SK-N-SH (cell line): ENCODE measurements at regions of chr3 and their contacts with region 1.

Region 1: GRCh38 chr3:46488735-46489361 is 8.9 kb upstream of the RTP3 start:
- DNase-seq: peak; percentile 95
- H3K4me3 ChIP-seq: peak overlapping the region in 1 of 2 experiments; percentile 51; a peak in 1 of 4 replicates
- H3K27ac ChIP-seq: no peak overlapping the region
- H3K4me1 ChIP-seq: peaks cover 0 to 3% of the 10 kb centered on the region in 2 experiments; a peak in 1 of 4 replicates
- H3K27me3 ChIP-seq: no peaks in the 10 kb centered on the region; the same call in 1 of the 2 replicates
- CTCF ChIP-seq: peak; percentile 93
- EP300 ChIP-seq: no peak
- RAD21 ChIP-seq: peak; percentile 99

Region 2: GRCh38 chr3:46163318-46164041 is 325.4 kb before region 1 on chr3:
- CTCF ChIA-PET with region 1: no interaction called
- POLR2A ChIA-PET with region 1: no interaction called
- DNase-seq: no peak
- H3K4me3 ChIP-seq: no peak overlapping the region
- H3K27ac ChIP-seq: no peak overlapping the region
- H3K4me1 ChIP-seq: no peaks in the 10 kb centered on the region
- H3K27me3 ChIP-seq: no peaks in the 10 kb centered on the region
- CTCF ChIP-seq: no peak
- EP300 ChIP-seq: no peak
- RAD21 ChIP-seq: no peak

Region 3: DNA sequence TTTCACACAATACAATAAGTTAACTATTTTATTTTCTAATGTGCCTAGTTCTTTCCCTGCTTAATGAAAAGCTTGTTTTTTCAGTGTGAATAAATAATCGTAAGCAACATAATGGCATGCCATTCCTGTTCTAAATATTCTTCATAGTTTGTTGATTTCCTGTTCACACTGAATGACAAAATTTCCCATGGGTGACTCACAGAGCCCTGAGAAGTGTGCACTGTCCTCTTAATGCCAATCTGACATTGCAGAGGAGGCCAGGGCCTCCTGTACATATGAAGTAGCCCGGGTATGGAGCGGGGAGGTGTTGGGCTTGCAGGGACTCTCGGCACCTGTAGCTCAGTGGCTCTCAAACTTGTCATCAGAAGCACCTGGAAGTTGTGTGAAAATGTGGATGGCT is 222.2 kb before region 1 on chr3:
- CTCF ChIA-PET with region 1: no interaction called
- POLR2A ChIA-PET with region 1: no interaction called
- DNase-seq: no peak
- H3K4me3 ChIP-seq: no peak overlapping the region
- H3K27ac ChIP-seq: no peak overlapping the region
- H3K4me1 ChIP-seq: no peaks in the 10 kb centered on the region
- H3K27me3 ChIP-seq: no peaks in the 10 kb centered on the region; the same call in 1 of the 2 replicates
- CTCF ChIP-seq: no peak
- EP300 ChIP-seq: no peak
- RAD21 ChIP-seq: no peak

Region 4: GRCh38 chr3:46462111-46462510 is 26.7 kb before region 1 on chr3:
- CTCF ChIA-PET with region 1: interaction called, 39 read pairs
- POLR2A ChIA-PET with region 1: no interaction called
- DNase-seq: no peak
- H3K4me3 ChIP-seq: no peak overlapping the region
- H3K27ac ChIP-seq: no peak overlapping the region
- H3K4me1 ChIP-seq: no peaks in the 10 kb centered on the region; a peak in 1 of 4 replicates
- H3K27me3 ChIP-seq: peaks cover 25% of the 10 kb centered on the region
- CTCF ChIP-seq: 0 out of 2 replicates have a peak, but pooled peaks have one; percentile 11
- EP300 ChIP-seq: no peak
- RAD21 ChIP-seq: no peak

Region 5: DNA sequence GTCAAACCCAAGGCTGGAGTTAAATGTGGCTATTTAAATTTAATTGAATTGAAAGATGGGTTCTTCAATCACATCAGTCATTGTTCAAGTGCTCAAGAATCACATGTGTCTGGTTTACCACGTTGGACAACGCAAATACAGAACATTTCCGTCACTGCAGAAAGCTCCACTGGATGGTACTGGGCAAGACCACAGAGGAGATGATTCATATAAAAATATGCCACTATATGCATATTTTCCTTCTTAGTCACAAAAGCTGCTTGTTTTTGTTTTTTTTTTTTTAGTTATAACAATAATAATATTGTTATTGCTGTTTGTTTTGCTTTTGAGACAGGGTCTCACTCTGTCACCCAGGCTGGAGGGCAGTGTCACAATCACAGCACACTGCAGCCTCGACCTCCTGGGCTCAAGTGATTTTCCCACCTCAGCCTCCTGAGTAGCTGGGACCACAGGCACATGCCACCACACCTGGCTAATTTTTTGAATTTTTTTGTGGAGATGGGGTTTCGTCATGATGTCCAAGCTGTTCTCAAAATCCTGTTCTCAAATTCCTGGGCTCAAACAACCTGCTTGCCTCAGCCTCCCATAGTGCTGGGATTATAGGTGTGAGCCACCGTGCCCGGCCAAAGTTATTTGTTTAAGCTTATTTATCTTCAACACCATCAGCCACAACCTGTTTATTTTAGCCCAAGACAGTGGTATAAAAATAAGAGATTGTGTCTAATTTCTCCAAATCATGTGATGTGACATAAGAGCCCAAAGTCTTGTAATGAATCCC is 28.4 kb after region 1 on chr3:
- CTCF ChIA-PET with region 1: interaction called, 18 read pairs
- POLR2A ChIA-PET with region 1: no interaction called
- DNase-seq: no peak
- H3K4me3 ChIP-seq: no peak overlapping the region
- H3K27ac ChIP-seq: no peak overlapping the region
- H3K4me1 ChIP-seq: no peaks in the 10 kb centered on the region
- H3K27me3 ChIP-seq: no peaks in the 10 kb centered on the region
- CTCF ChIP-seq: no peak
- EP300 ChIP-seq: no peak
- RAD21 ChIP-seq: no peak

Region 6: DNA sequence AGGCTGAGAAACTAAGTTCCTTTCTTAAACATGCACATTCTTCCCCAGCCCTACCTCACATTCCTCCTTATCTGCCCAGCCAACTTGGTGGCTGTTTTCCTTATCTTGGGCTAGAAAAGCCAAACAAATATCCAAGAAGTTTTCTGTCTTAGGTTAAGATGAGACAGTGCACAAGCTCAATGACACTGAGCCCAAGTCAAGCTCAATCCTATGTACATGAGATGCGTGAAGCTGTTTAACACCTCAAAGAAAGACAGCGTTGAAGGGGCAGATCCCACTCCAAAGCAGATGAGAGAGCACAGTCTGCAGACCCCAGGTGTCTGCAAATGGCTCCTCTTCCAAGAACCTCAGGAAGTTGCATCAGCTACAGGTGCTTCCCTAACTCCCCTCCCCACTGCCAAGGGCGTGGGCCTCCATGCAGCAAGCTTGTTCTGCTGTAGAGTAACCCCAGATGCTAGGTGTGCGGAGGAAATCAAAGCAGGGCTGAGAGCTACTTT is 60.6 kb after region 1 on chr3:
- CTCF ChIA-PET with region 1: interaction called, 27 read pairs
- POLR2A ChIA-PET with region 1: no interaction called
- DNase-seq: no peak
- H3K4me3 ChIP-seq: no peak overlapping the region
- H3K27ac ChIP-seq: no peak overlapping the region
- H3K4me1 ChIP-seq: no peaks in the 10 kb centered on the region
- H3K27me3 ChIP-seq: peaks cover 4% of the 10 kb centered on the region; the same call in 1 of the 2 replicates
- CTCF ChIP-seq: no peak
- EP300 ChIP-seq: no peak
- RAD21 ChIP-seq: no peak

Region 7: GRCh38 chr3:46629551-46630517 is 141.0 kb after region 1 on chr3:
- CTCF ChIA-PET with region 1: interaction called, 15 read pairs
- POLR2A ChIA-PET with region 1: no interaction called
- DNase-seq: peak; percentile 50
- H3K4me3 ChIP-seq: no peak overlapping the region
- H3K27ac ChIP-seq: no peak overlapping the region
- H3K4me1 ChIP-seq: no peaks in the 10 kb centered on the region
- H3K27me3 ChIP-seq: no peaks in the 10 kb centered on the region; the same call in 1 of the 2 replicates
- CTCF ChIP-seq: peak; percentile 60
- EP300 ChIP-seq: no peak
- RAD21 ChIP-seq: peak; percentile 26; the same call in 1 of the 2 replicates

Region 8: DNA sequence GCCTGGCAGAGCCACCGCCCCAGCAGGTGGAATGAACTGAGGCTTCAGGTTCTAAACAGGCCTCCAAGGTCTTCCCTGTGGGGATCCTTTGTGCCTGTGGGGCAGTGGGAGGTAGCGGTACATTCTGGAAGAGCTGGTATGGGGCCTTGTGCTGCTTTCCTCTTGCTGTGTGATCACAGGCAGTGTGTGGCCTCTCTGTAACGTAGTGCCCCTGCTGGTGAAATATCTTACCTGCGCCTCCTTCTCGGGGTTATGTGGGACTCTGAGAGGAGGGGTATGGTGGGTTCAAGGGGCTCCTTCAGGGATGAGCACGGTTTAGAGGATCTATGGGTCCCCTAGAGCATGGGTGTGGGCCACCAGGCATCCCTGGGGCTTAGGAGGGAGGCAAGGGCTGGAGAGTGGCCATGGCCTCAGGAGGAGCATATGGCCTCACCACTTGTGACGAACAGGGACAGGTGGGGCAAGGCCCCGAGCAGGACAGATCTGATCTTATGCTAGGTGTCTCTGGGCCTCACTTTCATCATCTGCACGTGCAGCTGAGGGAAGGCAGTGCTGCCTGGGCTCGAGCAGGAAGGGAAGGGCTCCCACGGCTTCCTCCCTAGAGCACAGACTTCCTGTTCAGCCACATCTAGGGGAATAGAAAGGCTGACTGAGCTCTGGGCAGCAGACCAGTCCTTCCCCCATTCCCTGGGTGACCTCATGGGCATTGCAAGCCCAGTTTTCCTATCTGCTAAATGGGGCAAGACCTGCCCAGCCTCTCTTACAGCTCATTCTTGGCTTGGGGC is 206.5 kb after region 1 on chr3:
- CTCF ChIA-PET with region 1: interaction called, 44 read pairs
- POLR2A ChIA-PET with region 1: no interaction called
- DNase-seq: peak; percentile 47
- H3K4me3 ChIP-seq: no peak overlapping the region
- H3K27ac ChIP-seq: no peak overlapping the region; a peak in 1 of 4 replicates
- H3K4me1 ChIP-seq: peaks cover 0 to 30% of the 10 kb centered on the region in 2 experiments; a peak in 1 of 4 replicates
- H3K27me3 ChIP-seq: no peaks in the 10 kb centered on the region; the same call in 1 of the 2 replicates
- CTCF ChIP-seq: no peak; the same call in 1 of the 2 replicates
- EP300 ChIP-seq: no peak
- RAD21 ChIP-seq: peak; percentile 27

Region 9: DNA sequence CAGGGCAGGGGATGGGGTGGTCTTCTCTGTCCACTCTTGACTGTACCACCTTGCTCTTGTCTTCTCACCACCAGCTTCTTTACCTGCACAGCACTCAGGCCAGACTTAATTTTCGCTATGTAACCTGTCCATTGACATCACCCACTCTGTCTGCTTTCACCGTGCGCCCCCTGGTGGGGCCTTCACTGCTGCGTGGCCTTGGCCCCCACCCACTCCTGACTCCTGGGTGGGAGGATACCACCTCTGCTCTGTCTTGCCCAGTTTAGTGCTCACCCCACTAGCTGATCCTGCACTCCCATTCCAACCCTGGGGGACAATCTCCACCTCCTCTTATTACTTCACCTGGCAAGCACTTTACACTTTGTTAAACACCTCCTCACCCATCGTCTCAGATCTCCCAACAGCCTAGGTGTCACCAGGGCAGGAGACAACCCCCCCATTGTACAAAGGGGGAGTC is 406.4 kb after region 1 on chr3:
- CTCF ChIA-PET with region 1: interaction called, 17 read pairs
- POLR2A ChIA-PET with region 1: no interaction called
- DNase-seq: peak; percentile 85
- H3K4me3 ChIP-seq: no peak overlapping the region; a peak in 1 of 4 replicates
- H3K27ac ChIP-seq: no peak overlapping the region
- H3K4me1 ChIP-seq: peaks cover 0 to 32% of the 10 kb centered on the region in 2 experiments; a peak in 1 of 4 replicates
- H3K27me3 ChIP-seq: no peaks in the 10 kb centered on the region
- CTCF ChIP-seq: peak; percentile 90
- EP300 ChIP-seq: no peak
- RAD21 ChIP-seq: peak; percentile 85